ENCODE measurements at regions of chr1 and their contacts with region 1.

Region 1: DNA sequence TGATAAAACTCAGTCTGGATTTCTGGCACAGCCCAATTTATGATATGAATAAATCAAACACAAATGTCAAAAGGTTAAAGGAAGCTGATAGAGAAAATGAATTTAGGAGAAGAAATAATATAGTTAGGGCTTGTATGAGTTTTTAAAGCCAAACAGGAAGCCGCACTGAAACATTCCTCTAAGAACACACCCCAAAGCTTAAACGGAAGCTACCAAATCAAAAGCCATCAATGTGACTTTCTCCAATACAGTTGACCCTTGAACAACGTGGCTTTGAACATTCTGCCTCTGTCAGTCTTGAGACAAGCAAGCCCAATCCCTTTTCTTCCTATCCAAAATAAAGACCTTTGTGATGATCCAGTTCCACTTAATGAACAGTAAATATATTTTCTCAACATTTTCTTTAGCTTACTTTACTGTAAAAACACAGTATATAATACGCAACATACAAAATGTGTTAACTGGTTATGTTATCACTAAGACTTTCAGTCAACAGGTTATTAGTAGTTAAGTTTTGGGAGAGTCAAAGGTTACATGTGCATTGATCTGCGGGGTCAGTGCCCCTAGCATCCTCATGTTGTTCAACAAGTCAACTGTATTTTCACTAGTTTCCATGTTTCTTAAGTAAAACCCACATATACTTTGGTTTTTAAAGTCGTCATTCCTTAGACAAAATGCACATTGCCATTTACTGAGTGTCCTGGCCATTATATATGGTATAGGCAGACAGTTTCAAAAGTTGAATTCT is 11.2 kb downstream of the SERBP1 start:
- DNase-seq: no peak
- H3K4me3 Mint-ChIP-seq: no peak overlapping the region
- H3K27ac Mint-ChIP-seq: peak overlapping the region; percentile 48
- H3K4me1 Mint-ChIP-seq: peaks cover 61% of the 10 kb centered on the region
- H3K27me3 Mint-ChIP-seq: no peaks in the 10 kb centered on the region

Region 2: DNA sequence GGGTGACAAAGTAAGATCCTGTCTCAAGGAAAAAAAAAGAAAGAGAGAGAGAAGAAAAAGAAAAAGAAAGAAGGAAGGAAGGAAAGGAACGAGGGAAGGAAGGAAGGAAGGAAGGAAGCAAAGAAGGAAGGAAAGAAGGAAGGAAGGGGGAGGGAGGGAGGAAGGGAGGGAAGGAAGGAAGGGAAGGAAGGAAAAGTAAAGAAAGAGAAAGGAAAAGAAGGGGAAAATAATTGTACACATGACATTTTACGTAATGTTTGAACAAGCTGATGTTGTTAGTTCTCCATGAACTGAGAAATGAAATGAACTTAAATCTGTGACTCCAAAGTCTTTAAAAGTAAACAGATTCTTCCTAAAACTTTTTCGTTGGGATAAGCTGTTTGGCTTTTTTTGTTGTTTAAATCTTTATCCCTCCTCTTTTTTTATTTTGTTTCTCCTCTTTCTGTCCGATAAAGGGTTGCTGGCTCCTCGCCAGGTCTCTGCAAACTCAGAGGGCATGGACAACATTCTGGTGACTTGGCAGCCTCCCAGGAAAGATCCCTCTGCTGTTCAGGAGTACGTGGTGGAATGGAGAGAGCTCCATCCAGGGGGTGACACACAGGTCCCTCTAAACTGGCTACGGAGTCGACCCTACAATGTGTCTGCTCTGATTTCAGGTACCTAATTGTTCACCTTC is 51.5 kb before region 1 on chr1:
- intact Hi-C with region 1: loop called (anchors 5 kb)
- DNase-seq: no peak
- H3K4me3 Mint-ChIP-seq: no peak overlapping the region
- H3K27ac Mint-ChIP-seq: peak overlapping the region; percentile 77
- H3K4me1 Mint-ChIP-seq: peaks cover 36% of the 10 kb centered on the region
- H3K27me3 Mint-ChIP-seq: no peaks in the 10 kb centered on the region

Region 3: GRCh38 chr1:67390041-67390887 is 28.7 kb before region 1 on chr1:
- intact Hi-C with region 1: loop called (anchors 5 kb)
- DNase-seq: no peak
- H3K4me3 Mint-ChIP-seq: no peak overlapping the region
- H3K27ac Mint-ChIP-seq: peak overlapping the region; percentile 61
- H3K4me1 Mint-ChIP-seq: peaks cover 13% of the 10 kb centered on the region
- H3K27me3 Mint-ChIP-seq: no peaks in the 10 kb centered on the region

Region 4: GRCh38 chr1:67460676-67461500 is 41.9 kb after region 1 on chr1:
- intact Hi-C with region 1: no loop called
- DNase-seq: no peak
- H3K4me3 Mint-ChIP-seq: no peak overlapping the region
- H3K27ac Mint-ChIP-seq: no peak overlapping the region
- H3K4me1 Mint-ChIP-seq: no peaks in the 10 kb centered on the region
- H3K27me3 Mint-ChIP-seq: peaks cover 9% of the 10 kb centered on the region

Measured in activated T-helper 1 cell treated with anti-CD3 and anti-CD28 coated beads, Interleukin-12 subunit alpha, Interleukin-12 subunit beta, Interleukin-2, Interleukin-4 antibody, amounts not matched to agents 30 ng/mL and 10 ng/mL and 1 ng/mL, durations not matched to agents 14 hours and 24 hours and 36 hours (primary cell).